Gastrocnemius medialis (tissue), 4 donors: ENCODE measurements at regions of chr9 and their contacts with region 1.

Region 1: GRCh38 chr9:114487607-114488300 is 17.5 kb downstream of the WHRN start:
- DNase-seq: peak in 1 of 2 donors; percentile 21
- ATAC-seq: peak in 1 of 2 donors; percentile 71
- H3K4me3 ChIP-seq: no peak overlapping the region
- H3K27ac ChIP-seq: no peak overlapping the region
- H3K4me1 ChIP-seq: no peaks in the 10 kb centered on the region
- H3K27me3 ChIP-seq: no peaks in the 10 kb centered on the region
- CTCF ChIP-seq: peak; percentile 54 to 75 (median 65)
- POLR2A ChIP-seq: no peak

Region 2: GRCh38 chr9:114452219-114453165 is 35.3 kb before region 1 on chr9:
- in situ Hi-C with region 1: no loop called
- intact Hi-C with region 1: no loop called
- DNase-seq: no peak
- ATAC-seq: no peak
- H3K4me3 ChIP-seq: no peak overlapping the region
- H3K27ac ChIP-seq: no peak overlapping the region
- H3K4me1 ChIP-seq: no peaks in the 10 kb centered on the region
- H3K27me3 ChIP-seq: no peaks in the 10 kb centered on the region
- CTCF ChIP-seq: no peak
- POLR2A ChIP-seq: no peak

Region 3: DNA sequence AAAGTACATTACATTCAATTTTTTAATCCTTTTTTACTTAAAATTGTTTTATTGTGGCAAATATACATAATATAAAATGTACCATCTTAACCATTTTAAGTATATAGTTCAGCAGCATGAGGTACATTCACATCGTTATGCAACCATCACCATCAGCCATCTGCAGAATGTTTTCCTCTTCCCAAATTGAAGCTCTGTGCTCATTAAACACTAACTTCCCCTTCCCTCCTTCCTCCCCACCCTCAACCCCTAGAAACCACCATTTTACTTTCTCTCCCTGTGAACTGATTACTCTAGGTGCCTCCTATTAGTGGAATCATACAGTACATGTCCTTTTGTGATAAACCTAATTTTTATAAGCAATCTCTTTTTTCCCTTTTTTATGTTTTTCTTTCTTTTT is 154.2 kb after region 1 on chr9:
- in situ Hi-C with region 1: loop called in 1 of 4 experiments (anchors 25 kb)
- intact Hi-C with region 1: no loop called
- DNase-seq: no peak
- ATAC-seq: no peak
- H3K4me3 ChIP-seq: no peak overlapping the region
- H3K27ac ChIP-seq: no peak overlapping the region
- H3K4me1 ChIP-seq: no peaks in the 10 kb centered on the region
- H3K27me3 ChIP-seq: no peaks in the 10 kb centered on the region
- CTCF ChIP-seq: no peak
- POLR2A ChIP-seq: no peak

Region 4: GRCh38 chr9:114653556-114654159 is 165.9 kb after region 1 on chr9:
- in situ Hi-C with region 1: loop called (anchors 10 to 25 kb)
- intact Hi-C with region 1: loop called (anchors 1 kb)
- DNase-seq: peak; percentile 9 to 43
- ATAC-seq: peak; percentile 16 to 66
- H3K4me3 ChIP-seq: no peak overlapping the region
- H3K27ac ChIP-seq: no peak overlapping the region
- H3K4me1 ChIP-seq: no peaks in the 10 kb centered on the region
- H3K27me3 ChIP-seq: no peaks in the 10 kb centered on the region
- CTCF ChIP-seq: peak; percentile 59 to 81 (median 76)
- POLR2A ChIP-seq: no peak

Region 5: GRCh38 chr9:114666851-114667250 is 179.1 kb after region 1 on chr9:
- in situ Hi-C with region 1: no loop called
- intact Hi-C with region 1: no loop called
- DNase-seq: no peak
- ATAC-seq: no peak
- H3K4me3 ChIP-seq: no peak overlapping the region
- H3K27ac ChIP-seq: no peak overlapping the region
- H3K4me1 ChIP-seq: no peaks in the 10 kb centered on the region
- H3K27me3 ChIP-seq: peaks cover 0 to 8% (median 0%) of the 10 kb centered on the region in 3 donors
- CTCF ChIP-seq: no peak
- POLR2A ChIP-seq: no peak